Activated CD8-positive, alpha-beta T cell treated with anti-CD3 and anti-CD28 coated beads for 36 hours (primary cell): ENCODE measurements at regions of chr2 and their contacts with region 1.

Region 1: GRCh38 chr2:73828818-73829570 is at the start of gene STAMBP:
- DNase-seq: peak; percentile 95
- ATAC-seq: peak; percentile 75
- H3K4me3 Mint-ChIP-seq: peak within 1 kb of the TSS; percentile 80
- H3K27ac Mint-ChIP-seq: peak within 1 kb of the TSS; percentile 95
- H3K4me1 Mint-ChIP-seq: peaks cover 43% of the 10 kb centered on the region
- H3K27me3 Mint-ChIP-seq: no peaks in the 10 kb centered on the region
- CTCF ChIP-seq: no peak
- total RNA-seq, gene STAMBP: 76.9 to 87.1 TPM

Region 2: DNA sequence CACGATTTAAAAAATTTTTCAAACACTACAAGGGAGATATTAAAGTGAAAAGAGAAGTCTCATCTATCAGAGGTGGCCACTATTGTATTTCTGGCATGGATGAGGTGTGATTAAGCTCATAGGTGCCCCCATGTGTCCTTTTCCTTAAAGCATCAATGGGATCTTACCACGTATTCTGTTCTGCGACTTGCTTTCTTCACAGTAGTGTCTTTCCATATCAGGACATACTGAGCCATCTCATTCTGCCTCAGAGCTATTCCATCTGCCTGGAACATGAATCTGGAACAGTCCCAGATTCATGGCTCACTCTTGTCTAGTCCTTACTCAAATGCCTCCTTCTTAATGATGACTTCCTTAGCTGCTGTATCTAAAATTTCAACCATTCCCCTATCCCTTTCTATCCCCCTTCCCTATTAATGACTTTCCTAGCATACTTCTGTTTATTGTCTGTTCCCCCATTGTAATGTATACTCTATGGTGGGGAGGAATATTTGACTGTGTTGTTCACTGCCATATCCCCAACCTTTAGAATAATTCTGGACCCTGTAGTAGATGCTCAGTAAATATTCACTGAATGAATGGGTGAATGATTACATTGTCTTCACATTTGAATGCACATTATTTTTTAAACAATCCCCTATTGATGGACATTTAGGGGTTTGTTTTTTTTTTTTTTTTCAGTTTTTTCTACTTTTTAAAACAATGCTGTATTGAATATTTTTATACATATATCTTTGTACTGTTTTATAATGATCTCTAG is 10.8 kb after region 1 on chr2:
- CTCF ChIA-PET with region 1: interaction called, 18 read pairs
- POLR2A ChIA-PET with region 1: no interaction called
- intact Hi-C with region 1: no loop called
- DNase-seq: no peak
- ATAC-seq: no peak
- H3K4me3 Mint-ChIP-seq: no peak overlapping the region
- H3K27ac Mint-ChIP-seq: no peak overlapping the region
- H3K4me1 Mint-ChIP-seq: peaks cover 25% of the 10 kb centered on the region
- H3K27me3 Mint-ChIP-seq: no peaks in the 10 kb centered on the region
- CTCF ChIP-seq: no peak

Region 3: DNA sequence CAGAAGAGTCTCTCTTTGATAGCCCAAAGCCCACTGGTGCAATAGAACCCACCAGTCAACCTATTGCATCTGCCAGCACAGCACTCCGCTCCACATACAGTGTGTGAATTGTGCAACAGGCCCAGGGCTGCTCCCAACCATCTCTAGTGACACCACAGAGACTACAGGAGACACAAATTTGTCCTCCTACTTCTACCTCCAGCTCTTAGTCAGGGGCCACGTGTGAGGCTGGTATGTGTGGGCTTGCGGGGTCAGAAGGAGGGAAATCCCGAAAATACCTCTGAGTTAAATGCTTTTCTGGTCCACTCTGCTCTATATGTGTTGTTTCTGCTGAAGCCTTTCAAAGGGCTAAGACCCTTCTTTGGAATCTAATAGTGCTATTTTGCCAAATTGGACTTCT is 115.7 kb after region 1 on chr2:
- CTCF ChIA-PET with region 1: interaction called, 12 read pairs
- POLR2A ChIA-PET with region 1: no interaction called
- intact Hi-C with region 1: no loop called
- DNase-seq: peak; percentile 70
- ATAC-seq: peak; percentile 89
- H3K4me3 Mint-ChIP-seq: peak overlapping the region; percentile 1
- H3K27ac Mint-ChIP-seq: peak overlapping the region; percentile 49
- H3K4me1 Mint-ChIP-seq: peaks cover 81% of the 10 kb centered on the region
- H3K27me3 Mint-ChIP-seq: no peaks in the 10 kb centered on the region
- CTCF ChIP-seq: no peak

Region 4: GRCh38 chr2:74130163-74130995 is 301.4 kb after region 1 on chr2:
- CTCF ChIA-PET with region 1: interaction called, 10 read pairs
- POLR2A ChIA-PET with region 1: no interaction called
- intact Hi-C with region 1: no loop called
- DNase-seq: peak; percentile 15
- ATAC-seq: peak; percentile 47
- H3K4me3 Mint-ChIP-seq: no peak overlapping the region
- H3K27ac Mint-ChIP-seq: no peak overlapping the region
- H3K4me1 Mint-ChIP-seq: no peaks in the 10 kb centered on the region
- H3K27me3 Mint-ChIP-seq: peaks cover 16% of the 10 kb centered on the region
- CTCF ChIP-seq: no peak

Region 5: DNA sequence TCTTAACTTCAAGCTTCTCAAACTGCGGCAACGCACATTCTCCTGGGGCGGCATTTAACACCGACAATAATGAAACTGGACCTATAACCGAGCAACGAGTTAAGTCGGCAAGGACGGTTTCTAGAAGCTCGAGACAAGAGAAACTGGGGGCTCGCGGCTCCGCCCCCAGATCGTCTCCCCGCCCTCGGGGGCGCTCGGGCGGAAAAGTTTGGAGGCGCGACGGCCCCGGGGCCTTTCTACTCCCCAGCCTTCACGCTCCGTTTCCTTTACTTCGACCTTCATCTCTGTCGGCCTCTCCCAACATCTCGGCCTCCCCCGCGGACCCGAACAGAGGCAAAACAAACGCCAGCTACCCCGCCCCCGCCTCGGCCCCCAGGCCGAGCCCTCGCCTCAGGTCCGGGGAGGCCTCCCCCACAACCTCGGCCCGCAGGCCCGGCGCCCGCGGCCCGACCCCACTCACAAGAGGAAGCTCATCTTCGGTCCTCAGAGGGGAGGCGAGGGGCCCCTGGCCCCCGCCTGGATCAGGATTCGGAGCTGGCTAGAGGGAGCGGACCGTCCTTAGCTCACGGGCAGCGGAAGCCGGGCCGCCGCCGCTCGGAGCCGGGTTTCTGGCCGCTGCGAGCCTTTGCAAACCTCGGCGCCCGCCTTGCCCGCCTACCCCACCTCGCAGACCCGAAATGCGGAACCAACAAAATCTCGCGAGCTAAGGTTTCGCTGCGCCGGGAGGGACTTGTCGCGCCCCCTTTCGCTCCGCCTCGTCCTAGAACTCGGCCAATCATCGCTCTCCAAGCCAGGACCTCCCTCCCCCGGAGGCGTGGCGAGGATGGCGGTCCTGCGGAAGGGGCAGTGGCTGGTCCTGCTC is 349.4 kb after region 1 on chr2 and contains the start of gene MOB1A:
- CTCF ChIA-PET with region 1: interaction called, 24 read pairs
- POLR2A ChIA-PET with region 1: no interaction called
- intact Hi-C with region 1: no loop called
- DNase-seq: peak; percentile 99
- ATAC-seq: peak; percentile 94
- H3K4me3 Mint-ChIP-seq: peak within 1 kb of the TSS; percentile 90
- H3K27ac Mint-ChIP-seq: peak within 1 kb of the TSS; percentile 94
- H3K4me1 Mint-ChIP-seq: peaks cover 41% of the 10 kb centered on the region
- H3K27me3 Mint-ChIP-seq: no peaks in the 10 kb centered on the region
- CTCF ChIP-seq: no peak
- total RNA-seq, gene MOB1A: 150 to 156 TPM

Region 6: GRCh38 chr2:74529357-74530238 is 700.6 kb after region 1 on chr2 and contains the starts of genes AUP1 and HTRA2:
- CTCF ChIA-PET with region 1: no interaction called
- POLR2A ChIA-PET with region 1: no interaction called
- intact Hi-C with region 1: no loop called
- DNase-seq: peak; percentile 98
- ATAC-seq: peak; percentile 86
- H3K4me3 Mint-ChIP-seq: peak within 1 kb of the TSS; percentile 98
- H3K27ac Mint-ChIP-seq: peak within 1 kb of the TSS; percentile 93
- H3K4me1 Mint-ChIP-seq: peaks cover 40% of the 10 kb centered on the region
- H3K27me3 Mint-ChIP-seq: no peaks in the 10 kb centered on the region
- CTCF ChIP-seq: no peak
- total RNA-seq, gene AUP1: 90.8 to 92.7 TPM
- total RNA-seq, gene HTRA2: 42.0 to 45.0 TPM

Region 7: DNA sequence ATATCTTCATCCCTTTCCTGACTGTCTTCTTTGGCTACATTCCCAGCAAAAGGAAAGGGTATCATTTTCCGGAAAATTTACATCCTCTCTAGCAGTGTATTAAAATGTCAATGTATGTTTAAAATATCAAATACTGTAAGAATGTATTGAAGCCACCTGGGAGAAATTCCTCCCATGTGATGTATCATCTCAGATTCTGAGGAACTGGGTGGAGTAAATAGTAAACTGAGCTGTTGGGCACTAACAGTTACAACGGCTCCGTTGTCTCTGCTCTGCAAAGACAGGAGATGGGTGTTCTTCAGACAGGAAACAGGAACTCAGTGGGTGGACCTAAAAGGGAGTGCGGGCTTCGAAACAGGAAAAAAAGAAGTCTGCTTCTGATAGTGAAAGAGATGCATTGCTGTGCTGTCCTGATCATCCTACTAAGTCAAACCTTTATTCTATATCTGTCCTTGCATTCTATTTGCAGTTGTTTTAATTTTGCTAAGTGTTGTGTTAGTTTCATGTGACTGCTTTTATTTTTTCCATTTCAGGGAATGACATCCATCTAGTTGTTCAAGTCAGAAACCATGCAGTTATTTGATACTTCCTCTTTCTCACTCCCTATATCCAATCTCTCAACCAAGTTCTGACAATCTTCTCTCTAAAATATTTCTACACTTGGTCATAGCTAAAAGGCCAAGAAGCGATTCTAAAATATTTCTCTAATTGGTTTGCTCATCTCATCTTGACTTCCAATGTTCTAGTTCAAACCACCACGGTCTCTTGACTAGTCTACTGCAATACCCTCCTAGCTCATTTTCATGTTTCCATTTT is 745.0 kb after region 1 on chr2:
- CTCF ChIA-PET with region 1: no interaction called
- POLR2A ChIA-PET with region 1: no interaction called
- intact Hi-C with region 1: no loop called
- DNase-seq: peak; percentile 35
- ATAC-seq: peak; percentile 69
- H3K4me3 Mint-ChIP-seq: peak overlapping the region; percentile 36
- H3K27ac Mint-ChIP-seq: peak overlapping the region; percentile 71
- H3K4me1 Mint-ChIP-seq: peaks cover 26% of the 10 kb centered on the region
- H3K27me3 Mint-ChIP-seq: no peaks in the 10 kb centered on the region
- CTCF ChIP-seq: no peak